H1 (cell line): ENCODE measurements at regions of chr1 and their contacts with region 1.

Region 1: DNA sequence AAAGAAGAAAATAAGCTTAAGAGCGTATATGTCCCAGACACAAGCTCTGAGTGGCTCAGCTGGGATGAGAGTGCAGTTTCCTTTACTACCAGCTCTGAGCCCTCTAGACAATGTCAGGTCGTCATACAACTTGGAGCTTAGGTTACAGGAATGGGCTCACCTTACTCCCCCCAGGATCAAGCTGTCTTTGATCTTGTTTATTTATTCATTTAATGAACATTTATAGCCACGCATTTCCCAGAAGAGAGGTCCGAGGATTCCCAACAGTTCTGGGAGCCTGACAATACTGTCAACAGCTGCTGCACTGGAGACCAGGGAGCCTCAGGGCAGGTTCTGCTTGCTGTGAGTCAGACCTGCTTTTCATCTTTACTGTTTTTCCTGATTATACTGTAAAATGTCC is 378.9 kb downstream of the PLPP3 start:
- DNase-seq: no peak
- H3K4me3 ChIP-seq: no peak overlapping the region
- H3K27ac ChIP-seq: no peak overlapping the region
- H3K4me1 ChIP-seq: peaks cover 0 to 6% (median 0%) of the 10 kb centered on the region in 4 experiments; a peak in 2 of 7 replicates
- H3K27me3 ChIP-seq: no peaks in the 10 kb centered on the region
- CTCF ChIP-seq: no peak
- EP300 ChIP-seq: no peak
- POLR2A ChIP-seq: no peak
- RAD21 ChIP-seq: no peak

Region 2: DNA sequence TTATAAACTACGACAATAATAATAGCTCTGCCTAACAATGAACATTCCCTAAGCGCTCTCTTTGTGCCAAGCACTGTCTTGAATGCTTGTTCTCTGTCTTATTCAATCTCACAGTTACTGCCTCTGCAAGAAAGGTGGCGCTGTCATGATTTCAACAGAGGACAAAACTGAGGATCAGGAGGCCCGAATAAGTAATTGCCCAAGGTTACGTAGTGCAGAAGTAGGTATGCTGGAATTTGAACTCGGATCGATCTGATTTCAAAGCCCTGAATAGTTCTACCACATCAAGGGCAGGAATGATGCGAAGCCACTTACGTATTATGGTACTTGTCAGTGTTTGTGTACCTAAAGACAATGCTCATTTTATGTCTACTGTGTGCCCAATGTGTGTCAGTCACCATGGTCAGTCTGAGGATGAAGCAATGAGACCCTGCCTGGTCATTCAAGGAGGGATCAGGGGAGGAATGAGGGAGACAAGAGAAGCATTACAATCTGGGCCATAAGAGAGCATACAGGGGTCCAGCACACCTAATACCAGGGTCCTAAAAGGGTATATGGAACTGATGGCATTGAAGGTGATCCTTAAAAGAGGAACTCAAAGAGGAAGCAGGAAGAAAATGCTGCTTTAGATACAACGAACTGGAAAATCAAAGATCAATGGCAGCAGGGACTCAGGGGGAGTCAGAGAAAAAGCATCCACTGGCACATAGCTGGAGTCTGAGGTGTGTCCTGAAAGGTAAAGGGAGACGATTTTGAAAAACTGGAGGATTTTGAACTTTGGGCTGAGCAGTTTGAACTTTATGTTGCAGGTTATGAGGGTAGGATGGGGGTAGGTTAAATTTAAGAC is 10.3 kb before region 1 on chr1:
- CTCF ChIA-PET with region 1: interaction called, 17 read pairs
- POLR2A ChIA-PET with region 1: no interaction called
- DNase-seq: no peak
- H3K4me3 ChIP-seq: no peak overlapping the region
- H3K27ac ChIP-seq: no peak overlapping the region
- H3K4me1 ChIP-seq: peaks cover 3 to 14% (median 6%) of the 10 kb centered on the region in 4 experiments; a peak in 5 of 7 replicates
- H3K27me3 ChIP-seq: no peaks in the 10 kb centered on the region
- CTCF ChIP-seq: peak in 2 of 3 experiments; percentile 61 to 88; a peak in 3 of 4 replicates
- EP300 ChIP-seq: no peak
- POLR2A ChIP-seq: no peak
- RAD21 ChIP-seq: peak; percentile 61 to 74

Region 3: GRCh38 chr1:56235909-56236510 is 35.6 kb after region 1 on chr1:
- CTCF ChIA-PET with region 1: no interaction called
- POLR2A ChIA-PET with region 1: no interaction called
- DNase-seq: no peak
- H3K4me3 ChIP-seq: no peak overlapping the region
- H3K27ac ChIP-seq: no peak overlapping the region
- H3K4me1 ChIP-seq: no peaks in the 10 kb centered on the region
- H3K27me3 ChIP-seq: no peaks in the 10 kb centered on the region
- CTCF ChIP-seq: no peak
- EP300 ChIP-seq: no peak
- POLR2A ChIP-seq: no peak
- RAD21 ChIP-seq: peak; percentile 9 to 27; a peak in 2 of 4 replicates